MCF 10A (cell line): ENCODE measurements at regions of chr5 and their contacts with region 1.

Region 1: GRCh38 chr5:119328753-119329602 is 26.8 kb upstream of the TNFAIP8 start:
- DNase-seq: peak; percentile 54
- H3K4me3 Mint-ChIP-seq: no peak overlapping the region
- H3K27ac Mint-ChIP-seq: peak overlapping the region; percentile 65
- H3K4me1 Mint-ChIP-seq: peaks cover 55% of the 10 kb centered on the region
- H3K27me3 Mint-ChIP-seq: no peaks in the 10 kb centered on the region
- CTCF ChIP-seq: no peak

Region 2: GRCh38 chr5:118752575-118753368 is 576.2 kb before region 1 on chr5:
- CTCF ChIA-PET with region 1: no interaction called
- POLR2A ChIA-PET with region 1: no interaction called
- intact Hi-C with region 1: no loop called
- DNase-seq: no peak
- H3K4me3 Mint-ChIP-seq: no peak overlapping the region
- H3K27ac Mint-ChIP-seq: no peak overlapping the region
- H3K4me1 Mint-ChIP-seq: no peaks in the 10 kb centered on the region
- H3K27me3 Mint-ChIP-seq: no peaks in the 10 kb centered on the region
- CTCF ChIP-seq: no peak

Region 3: GRCh38 chr5:119070828-119071572 is 258.0 kb before region 1 on chr5 and contains the start of gene DMXL1:
- CTCF ChIA-PET with region 1: no interaction called
- POLR2A ChIA-PET with region 1: interaction called, 39 read pairs
- intact Hi-C with region 1: no loop called
- DNase-seq: peak; percentile 100
- H3K4me3 Mint-ChIP-seq: peak within 1 kb of the TSS; percentile 77
- H3K27ac Mint-ChIP-seq: peak within 1 kb of the TSS; percentile 79
- H3K4me1 Mint-ChIP-seq: peaks cover 24% of the 10 kb centered on the region
- H3K27me3 Mint-ChIP-seq: no peaks in the 10 kb centered on the region
- CTCF ChIP-seq: no peak
- total RNA-seq, gene DMXL1: 38.1 and 45.1 TPM in 2 replicates

Region 4: GRCh38 chr5:119131530-119132313 is 197.3 kb before region 1 on chr5:
- CTCF ChIA-PET with region 1: no interaction called
- POLR2A ChIA-PET with region 1: no interaction called
- intact Hi-C with region 1: no loop called
- DNase-seq: no peak
- H3K4me3 Mint-ChIP-seq: no peak overlapping the region
- H3K27ac Mint-ChIP-seq: no peak overlapping the region
- H3K4me1 Mint-ChIP-seq: no peaks in the 10 kb centered on the region
- H3K27me3 Mint-ChIP-seq: no peaks in the 10 kb centered on the region
- CTCF ChIP-seq: no peak

Region 5: GRCh38 chr5:119274767-119275130 is 54.2 kb before region 1 on chr5:
- CTCF ChIA-PET with region 1: interaction called, 100 read pairs
- POLR2A ChIA-PET with region 1: interaction called, 117 read pairs
- intact Hi-C with region 1: no loop called
- DNase-seq: peak; percentile 80
- H3K4me3 Mint-ChIP-seq: no peak overlapping the region
- H3K27ac Mint-ChIP-seq: peak overlapping the region; percentile 80
- H3K4me1 Mint-ChIP-seq: peaks cover 35% of the 10 kb centered on the region
- H3K27me3 Mint-ChIP-seq: no peaks in the 10 kb centered on the region
- CTCF ChIP-seq: no peak

Region 6: DNA sequence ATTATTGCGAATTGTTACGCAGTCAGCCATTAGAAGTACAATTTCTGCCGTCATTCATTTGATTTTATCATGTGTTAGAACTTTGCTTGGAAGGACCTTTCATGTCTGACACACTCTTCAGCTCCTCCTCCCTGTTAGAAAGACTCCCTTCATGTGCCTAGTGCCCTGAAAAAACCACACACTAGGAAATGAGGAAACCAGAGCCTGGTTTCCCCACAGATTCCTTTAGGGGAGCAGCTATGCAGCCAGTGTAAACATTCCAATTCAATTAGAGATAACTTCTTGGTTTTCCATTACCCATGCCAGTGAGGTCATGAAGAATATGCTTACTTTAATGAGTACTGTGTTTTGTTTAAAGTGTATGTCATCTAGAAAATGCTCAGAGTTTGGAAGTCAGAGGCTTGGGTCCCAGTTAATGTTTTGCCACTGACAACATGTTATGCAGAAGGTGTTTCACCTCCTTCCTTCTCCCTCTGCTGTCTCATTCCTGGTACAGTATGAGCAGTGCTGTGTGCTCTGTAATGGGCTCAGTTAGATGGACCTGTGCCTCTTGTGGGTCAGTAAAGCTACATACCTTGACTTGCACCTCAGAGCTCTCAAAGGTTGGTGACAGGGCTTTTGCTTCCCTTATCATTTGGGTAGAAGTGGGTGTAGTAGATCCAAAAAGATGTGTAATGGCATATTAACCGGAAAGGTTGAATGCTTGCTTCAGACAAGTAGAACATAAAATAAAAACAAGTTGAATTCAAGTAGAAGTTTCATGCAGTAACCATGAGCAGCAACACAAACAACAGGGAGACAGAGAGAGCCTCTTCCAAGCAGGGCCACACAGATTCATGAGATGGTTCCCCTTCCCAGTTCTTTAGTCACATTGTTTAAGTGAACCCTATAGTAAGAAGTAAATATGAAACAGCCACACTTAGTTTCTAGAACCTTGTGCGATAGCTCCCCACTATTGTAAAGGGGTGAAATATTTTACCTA is 25.8 kb before region 1 on chr5:
- CTCF ChIA-PET with region 1: interaction called, 16 read pairs
- POLR2A ChIA-PET with region 1: interaction called, 28 read pairs
- intact Hi-C with region 1: no loop called
- DNase-seq: peak; percentile 94
- H3K4me3 Mint-ChIP-seq: peak overlapping the region; percentile 52
- H3K27ac Mint-ChIP-seq: peak overlapping the region; percentile 91
- H3K4me1 Mint-ChIP-seq: peaks cover 33% of the 10 kb centered on the region
- H3K27me3 Mint-ChIP-seq: no peaks in the 10 kb centered on the region
- CTCF ChIP-seq: no peak

Region 7: GRCh38 chr5:119340597-119341218 is 11.7 kb after region 1 on chr5:
- CTCF ChIA-PET with region 1: interaction called, 50 read pairs
- POLR2A ChIA-PET with region 1: interaction called, 100 read pairs
- intact Hi-C with region 1: no loop called
- DNase-seq: no peak
- H3K4me3 Mint-ChIP-seq: no peak overlapping the region
- H3K27ac Mint-ChIP-seq: no peak overlapping the region
- H3K4me1 Mint-ChIP-seq: peaks cover 24% of the 10 kb centered on the region
- H3K27me3 Mint-ChIP-seq: no peaks in the 10 kb centered on the region
- CTCF ChIP-seq: no peak

Region 8: GRCh38 chr5:119397518-119398380 is 68.8 kb after region 1 on chr5:
- CTCF ChIA-PET with region 1: interaction called, 25 read pairs
- POLR2A ChIA-PET with region 1: interaction called, 54 read pairs
- intact Hi-C with region 1: no loop called
- DNase-seq: peak; percentile 87
- H3K4me3 Mint-ChIP-seq: peak overlapping the region; percentile 63
- H3K27ac Mint-ChIP-seq: peak overlapping the region; percentile 94
- H3K4me1 Mint-ChIP-seq: peaks cover 48% of the 10 kb centered on the region
- H3K27me3 Mint-ChIP-seq: no peaks in the 10 kb centered on the region
- CTCF ChIP-seq: no peak